ENCODE measurements at regions of chr3 and their contacts with region 1.

Region 1: GRCh38 chr3:79361748-79362378 is 405.9 kb downstream of the ROBO1 start:
- DNase-seq: no peak
- H3K4me3 ChIP-seq: peak overlapping the region; percentile 32
- H3K27ac ChIP-seq: no peak overlapping the region
- H3K4me1 ChIP-seq: no peaks in the 10 kb centered on the region
- H3K27me3 ChIP-seq: peaks cover 10% of the 10 kb centered on the region
- CTCF ChIP-seq: peak; percentile 77

Region 2: DNA sequence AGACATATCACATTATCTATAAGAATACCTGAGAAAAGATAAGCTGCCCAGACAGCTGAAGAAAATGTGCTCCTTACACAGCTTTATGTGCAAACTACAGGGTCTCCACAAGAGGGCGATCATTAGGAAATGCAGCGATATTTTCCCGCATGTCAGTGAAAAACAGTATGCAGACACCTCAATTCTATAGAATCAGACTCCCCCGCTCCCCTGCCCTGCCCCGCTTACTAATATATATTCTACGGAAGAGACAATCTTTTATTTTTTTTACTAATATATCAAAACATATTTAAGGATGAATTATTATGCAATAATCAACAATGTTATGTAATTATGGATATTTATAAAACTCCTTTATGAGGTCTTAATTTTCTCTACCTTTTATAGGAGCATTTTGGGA is 275.3 kb before region 1 on chr3:
- intact Hi-C with region 1: loop called (anchors 5 kb)
- DNase-seq: no peak
- H3K4me3 ChIP-seq: no peak overlapping the region
- H3K27ac ChIP-seq: no peak overlapping the region
- H3K4me1 ChIP-seq: no peaks in the 10 kb centered on the region
- H3K27me3 ChIP-seq: no peaks in the 10 kb centered on the region
- CTCF ChIP-seq: peak; percentile 78